ENCODE measurements at regions of chr11 and their contacts with region 1.

Region 1: DNA sequence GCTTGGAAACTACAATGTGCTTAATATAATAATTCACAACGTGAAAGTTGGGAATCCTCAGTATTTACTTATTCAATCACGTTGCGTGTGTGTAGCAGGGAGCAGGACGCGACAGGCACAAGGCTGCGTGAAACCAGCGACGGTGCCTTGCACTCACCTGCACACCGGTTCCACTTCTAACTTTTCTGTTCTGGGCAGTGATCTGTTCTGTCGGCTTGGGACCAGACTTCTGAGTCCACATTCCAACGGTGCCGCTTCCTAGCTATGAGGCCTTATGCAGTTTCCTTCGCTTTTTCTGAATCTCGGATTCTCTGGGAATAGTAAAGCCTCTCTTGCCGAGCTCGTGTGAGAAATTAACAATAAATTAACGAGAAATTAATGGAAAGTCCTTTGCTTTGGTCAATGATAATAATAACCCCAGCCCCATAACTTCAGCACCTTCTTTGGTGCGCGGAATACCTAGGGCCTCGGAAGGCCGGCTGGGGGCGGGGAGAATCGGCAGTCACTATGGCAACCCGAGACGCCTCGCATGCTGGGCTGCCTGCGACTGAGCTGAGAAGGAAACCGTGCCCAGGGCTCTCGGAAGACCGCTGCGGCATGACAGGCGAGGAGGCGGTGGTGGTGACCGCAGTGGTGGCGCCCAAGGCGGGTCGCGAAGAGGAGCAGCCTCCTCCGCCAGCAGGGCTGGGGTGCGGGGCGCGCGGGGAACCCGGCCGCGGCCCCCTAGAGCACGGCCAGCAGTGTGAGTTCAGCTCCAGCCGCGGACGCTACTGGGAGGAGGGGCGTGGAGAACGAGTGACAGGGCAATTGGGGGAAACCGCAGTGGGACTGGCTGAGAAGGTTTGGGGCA is at the start of gene C11orf97:
- DNase-seq: peak; percentile 72
- H3K4me3 ChIP-seq: peak within 1 kb of the TSS; percentile 33 to 63 (median 49)
- H3K27ac ChIP-seq: no peak within 1 kb of the TSS
- H3K4me1 ChIP-seq: peaks cover 0 to 7% (median 2%) of the 10 kb centered on the region in 4 donors
- H3K27me3 ChIP-seq: peaks cover 0 to 16% (median 0%) of the 10 kb centered on the region in 3 donors
- CTCF ChIP-seq: no peak
- EP300 ChIP-seq: no peak
- POLR2A ChIP-seq: no peak
- total RNA-seq, gene C11orf97: not detected

Region 2: GRCh38 chr11:94897330-94897768 is 385.2 kb after region 1 on chr11:
- intact Hi-C with region 1: loop called (anchors 10 kb)
- DNase-seq: peak; percentile 76
- H3K4me3 ChIP-seq: no peak overlapping the region
- H3K27ac ChIP-seq: no peak overlapping the region
- H3K4me1 ChIP-seq: peaks cover 0 to 9% (median 0%) of the 10 kb centered on the region in 4 donors
- H3K27me3 ChIP-seq: no peaks in the 10 kb centered on the region
- CTCF ChIP-seq: peak; percentile 29 to 86 (median 76)
- EP300 ChIP-seq: no peak
- POLR2A ChIP-seq: no peak